Vagina (tissue), 2 donors: ENCODE measurements at regions of chr7 and their contacts with region 1.

Region 1: GRCh38 chr7:119397156-119397555 is 875.8 kb upstream of the KCND2 start:
- DNase-seq: no peak
- H3K4me3 ChIP-seq: no peak overlapping the region
- H3K27ac ChIP-seq: no peak overlapping the region
- H3K4me1 ChIP-seq: no peaks in the 10 kb centered on the region
- H3K27me3 ChIP-seq: no peaks in the 10 kb centered on the region
- CTCF ChIP-seq: no peak
- POLR2A ChIP-seq: no peak

Region 2: GRCh38 chr7:119329715-119330114 is 67.4 kb before region 1 on chr7:
- intact Hi-C with region 1: loop called (anchors 2 kb)
- DNase-seq: no peak
- H3K4me3 ChIP-seq: no peak overlapping the region
- H3K27ac ChIP-seq: no peak overlapping the region
- H3K4me1 ChIP-seq: no peaks in the 10 kb centered on the region
- H3K27me3 ChIP-seq: no peaks in the 10 kb centered on the region
- CTCF ChIP-seq: no peak
- POLR2A ChIP-seq: no peak